ENCODE measurements at regions of chr12 and their contacts with region 1.

Region 1: DNA sequence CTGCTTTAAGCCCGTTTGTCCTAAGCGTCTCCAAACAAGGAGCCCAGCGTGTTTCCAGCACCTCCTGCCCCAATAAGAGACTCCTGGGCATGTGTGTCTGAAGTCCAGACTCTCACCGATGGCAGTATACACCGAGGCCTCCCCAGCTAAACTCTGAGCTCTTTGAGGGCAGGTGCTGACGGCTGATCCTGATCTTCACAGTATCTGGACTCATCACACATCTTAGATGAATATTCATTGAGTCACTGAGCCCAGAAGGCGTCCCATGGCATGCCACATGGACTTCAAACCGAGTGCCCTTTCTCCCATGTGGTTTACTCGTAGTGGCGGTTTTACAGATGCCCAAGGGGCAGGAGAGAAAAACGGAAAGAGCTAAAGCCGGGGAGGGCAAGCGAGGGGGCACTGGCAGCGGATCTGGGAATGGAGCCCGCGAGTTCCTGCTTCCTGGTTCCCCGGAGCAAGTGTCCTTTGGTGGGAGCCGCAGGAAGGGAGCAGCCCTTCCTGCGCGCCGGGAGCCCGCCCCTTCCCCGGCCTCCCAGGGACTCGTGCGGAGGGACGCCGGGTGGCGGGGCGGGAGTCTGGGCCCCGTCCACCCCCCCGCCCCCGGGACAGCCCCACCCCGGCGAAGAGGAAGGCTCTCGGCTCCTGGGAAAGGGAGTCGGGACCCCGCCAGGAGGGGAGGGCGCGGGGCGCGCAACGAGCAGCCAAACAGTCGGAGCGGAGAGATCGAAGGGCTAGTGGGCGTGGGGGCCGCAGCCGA is 585 bp upstream of the TEAD4 start:
- DNase-seq: no peak
- H3K4me3 ChIP-seq: peak overlapping the region; percentile 79
- H3K27me3 ChIP-seq: no peaks in the 10 kb centered on the region
- CTCF ChIP-seq: no peak

Region 2: DNA sequence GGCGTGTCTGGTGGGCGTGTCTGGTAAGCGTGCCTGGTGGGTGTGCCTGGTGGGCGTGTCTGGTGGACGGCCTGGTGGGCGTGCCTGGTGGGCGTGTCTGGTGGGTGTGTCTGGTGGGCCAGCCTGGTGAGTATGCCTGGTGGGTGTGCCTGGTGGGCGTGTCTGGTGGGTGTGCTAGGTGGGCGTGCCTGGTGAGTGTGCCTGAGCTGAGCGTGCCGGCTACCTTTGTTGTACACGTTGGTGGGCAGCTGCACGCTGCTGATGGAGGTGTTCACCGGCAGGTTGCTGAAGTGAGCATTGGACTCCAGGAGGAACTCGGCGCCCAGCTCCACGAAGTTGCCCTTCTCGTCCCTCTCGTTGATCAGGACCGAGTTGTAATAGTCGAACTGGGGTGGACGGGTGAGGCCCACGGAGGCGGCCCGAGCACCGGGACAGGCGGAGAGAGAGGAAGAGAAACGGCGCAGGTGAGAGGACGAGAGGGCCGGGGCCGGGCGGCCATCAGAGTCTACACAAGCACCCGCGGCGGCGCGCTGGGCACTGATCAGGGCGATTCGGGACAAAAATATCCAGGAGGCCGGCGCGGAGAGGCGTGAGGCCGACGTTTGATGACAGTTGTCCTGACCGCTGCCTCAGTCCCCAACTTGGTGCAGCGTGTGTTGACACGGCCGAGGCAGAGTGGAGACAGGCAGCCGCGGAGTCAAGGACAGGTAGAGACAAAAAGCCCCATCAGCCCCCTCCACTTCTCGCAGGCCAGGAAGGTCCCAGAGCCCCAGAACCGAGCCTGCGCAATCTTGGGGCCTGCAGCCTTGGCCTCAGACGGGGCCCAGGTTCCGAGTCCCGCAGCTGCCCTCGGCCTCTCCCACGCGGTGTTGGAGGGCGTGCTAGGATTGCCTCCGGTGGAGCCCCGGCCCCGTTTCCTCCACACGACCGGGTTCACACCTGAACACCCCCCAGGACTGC is 1050.7 kb before region 1 on chr12:
- CTCF ChIA-PET with region 1: no interaction called
- POLR2A ChIA-PET with region 1: interaction called, 32 read pairs
- DNase-seq: no peak
- H3K4me3 ChIP-seq: no peak overlapping the region
- H3K27me3 ChIP-seq: peaks cover 3% of the 10 kb centered on the region
- CTCF ChIP-seq: no peak

Region 3: DNA sequence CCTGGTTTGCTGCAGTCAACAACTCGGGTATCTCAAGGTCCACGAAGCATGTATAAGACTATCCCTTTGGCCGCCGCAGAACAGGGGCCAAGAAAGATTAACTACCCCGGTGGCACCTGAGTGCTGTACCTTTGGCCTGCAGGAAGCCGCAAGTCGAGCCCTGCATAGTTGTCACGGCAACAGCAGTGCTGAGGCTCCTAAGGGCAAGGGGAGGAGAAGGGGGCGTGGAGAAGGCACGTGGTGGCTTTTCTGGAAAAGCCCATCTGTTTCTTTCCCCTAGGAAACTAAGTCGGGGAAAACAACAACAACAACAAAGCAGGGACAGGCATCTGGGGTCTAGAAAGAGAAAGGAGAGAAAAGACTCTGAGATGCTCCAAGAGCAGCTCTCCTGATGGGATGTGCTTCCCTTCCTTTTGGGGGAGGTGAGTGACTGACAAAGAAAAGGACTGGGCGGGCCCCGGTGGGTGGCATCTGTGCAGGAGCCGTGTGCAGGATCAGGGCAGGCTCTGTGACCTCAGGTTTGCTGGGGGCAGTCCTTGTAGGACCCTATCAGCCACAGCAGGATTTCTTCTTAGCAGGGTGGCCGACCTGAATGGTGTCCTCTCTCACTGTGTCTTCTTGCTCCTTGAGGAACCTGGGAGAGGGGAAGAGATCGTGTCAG is 656.3 kb after region 1 on chr12:
- CTCF ChIA-PET with region 1: no interaction called
- POLR2A ChIA-PET with region 1: no interaction called
- DNase-seq: no peak
- H3K4me3 ChIP-seq: no peak overlapping the region
- H3K27me3 ChIP-seq: no peaks in the 10 kb centered on the region; the same call in 1 of the 2 replicates
- CTCF ChIP-seq: no peak